Right ventricle myocardium superior (tissue), 1 donor: ENCODE measurements at regions of chr19 and their contacts with region 1.

Region 1: DNA sequence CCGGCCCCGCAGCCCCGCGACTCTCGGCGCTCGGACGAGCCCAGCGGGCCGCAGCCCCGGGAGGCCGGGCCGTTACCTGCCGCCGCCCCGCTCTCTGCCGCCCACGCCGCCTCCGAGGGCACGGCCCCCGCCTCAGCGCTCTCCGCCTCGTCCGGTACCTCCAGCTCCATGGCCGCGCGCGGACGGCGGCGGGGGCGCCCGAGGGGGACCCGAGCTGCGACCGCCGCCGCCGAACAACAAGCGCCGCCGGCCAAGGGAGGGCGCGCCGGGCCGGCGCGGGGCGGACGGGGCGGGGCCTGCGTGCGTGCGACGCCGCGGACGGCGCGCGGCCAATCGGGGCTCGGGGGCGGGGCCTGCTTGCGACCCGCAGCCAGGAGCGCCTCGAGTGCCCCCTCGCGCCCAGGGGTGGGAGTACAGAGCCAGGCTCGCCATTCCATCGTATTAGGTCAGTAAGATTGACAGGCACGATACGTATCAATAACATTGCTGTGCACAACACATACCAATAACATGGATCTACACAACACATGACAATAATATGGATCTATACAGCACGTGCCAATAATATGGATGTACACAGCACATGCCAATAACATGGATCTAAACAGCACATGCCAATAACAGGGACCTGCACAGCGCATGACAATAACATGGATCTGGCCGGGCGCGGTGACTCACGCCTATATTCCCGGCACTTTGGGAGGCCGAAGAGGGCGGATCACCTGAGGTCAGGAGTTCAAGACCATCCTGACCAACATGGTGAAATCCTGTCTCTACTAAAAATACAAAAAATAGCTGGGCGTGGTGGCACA is at the start of gene PIP5K1C:
- DNase-seq: peak; percentile 95
- ATAC-seq: peak; percentile 96
- total RNA-seq, gene PIP5K1C: 31.6 TPM

Region 2: DNA sequence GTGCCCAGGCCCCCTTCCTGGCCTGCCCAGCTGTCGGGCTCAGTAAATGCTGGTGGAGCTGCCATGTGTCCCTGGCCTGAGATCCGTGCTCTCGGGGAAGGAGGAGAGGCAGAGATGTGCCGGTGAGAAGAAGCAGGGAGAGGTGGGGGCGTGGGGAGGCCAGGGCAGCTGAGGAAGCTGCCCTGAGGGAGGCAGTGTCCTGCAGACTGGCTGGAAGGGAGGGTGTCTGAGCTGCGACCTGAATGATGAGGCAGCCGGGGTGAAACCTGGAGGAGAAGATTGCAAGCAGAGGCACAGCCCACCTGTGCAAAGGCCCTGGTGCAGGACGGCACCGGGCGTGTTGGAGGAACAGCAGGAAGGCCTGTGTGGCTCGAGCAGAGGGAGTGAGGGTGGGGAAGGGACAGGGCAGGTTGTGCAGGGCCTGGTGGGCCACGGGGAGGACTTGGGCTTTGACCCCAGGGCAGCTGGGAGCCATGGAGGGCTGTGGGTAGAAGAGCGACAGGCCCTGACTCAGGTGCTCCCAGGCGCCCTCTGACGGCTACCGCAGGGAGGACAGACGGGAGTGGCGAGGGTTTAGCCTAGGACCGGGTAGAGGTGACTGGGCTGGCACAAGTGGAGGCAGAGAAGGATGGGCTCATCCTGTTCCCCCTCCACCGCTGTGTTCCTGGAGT is 489.9 kb before region 1 on chr19:
- intact Hi-C with region 1: no loop called
- DNase-seq: peak; percentile 78
- ATAC-seq: peak; percentile 69

Region 3: GRCh38 chr19:3544742-3545668 is 155.4 kb before region 1 on chr19:
- intact Hi-C with region 1: loop called (anchors 10 kb)
- DNase-seq: peak; percentile 83
- ATAC-seq: peak; percentile 74

Region 4: GRCh38 chr19:3655402-3656072 is 44.9 kb before region 1 on chr19:
- intact Hi-C with region 1: no loop called
- DNase-seq: no peak
- ATAC-seq: no peak

Region 5: GRCh38 chr19:3665681-3666544 is 34.5 kb before region 1 on chr19:
- intact Hi-C with region 1: loop called (anchors 5 kb)
- DNase-seq: peak; percentile 83
- ATAC-seq: peak; percentile 64